Activated CD4-positive, alpha-beta T cell treated with anti-CD3 and anti-CD28 coated beads, Interleukin-2, amount 10 ng/mL, durations not matched to agents 24 days and 14 days (primary cell): ENCODE measurements at regions of chr3 and their contacts with region 1.

Region 1: DNA sequence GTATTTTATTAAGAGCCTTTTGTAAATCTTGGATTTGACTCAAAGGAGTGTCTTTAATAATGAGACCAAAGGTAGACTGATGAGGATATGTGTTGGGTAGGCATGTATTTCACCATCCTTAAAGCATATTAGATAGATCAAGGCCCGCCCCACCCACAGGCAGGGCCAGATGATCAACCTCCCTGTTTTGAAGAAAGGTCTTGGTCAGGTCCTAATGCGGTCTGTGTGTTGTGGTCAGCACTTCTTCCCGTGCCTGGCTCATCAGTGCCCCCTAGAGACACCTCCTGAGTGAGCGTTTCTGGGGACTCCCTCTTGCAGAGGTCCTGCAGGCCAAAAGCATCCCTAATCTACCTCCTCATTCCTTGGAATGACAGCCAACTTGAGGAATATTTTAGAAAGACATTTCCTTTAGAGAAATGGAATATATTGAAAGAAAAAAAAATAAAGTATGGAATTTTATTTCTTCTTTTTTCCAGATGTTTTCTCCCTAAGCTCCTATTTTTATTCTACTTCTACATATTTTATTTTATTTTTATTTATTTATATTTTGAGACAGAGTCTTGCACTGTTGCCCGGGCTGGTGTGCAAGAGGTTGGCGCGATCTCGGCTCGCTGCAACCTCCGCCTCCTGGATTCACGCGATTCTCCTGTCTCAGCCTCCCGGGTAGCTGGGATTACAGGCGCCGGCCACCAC is 6.0 kb downstream of the TM4SF4 start:
- DNase-seq: peak; percentile 76
- H3K4me3 Mint-ChIP-seq: no peak overlapping the region
- H3K27ac Mint-ChIP-seq: no peak overlapping the region
- H3K4me1 Mint-ChIP-seq: no peaks in the 10 kb centered on the region
- H3K27me3 Mint-ChIP-seq: peaks cover 3% of the 10 kb centered on the region

Region 2: GRCh38 chr3:148991194-148992026 is 489.1 kb before region 1 on chr3 and contains the start of gene GYG1:
- intact Hi-C with region 1: no loop called
- DNase-seq: peak; percentile 93
- H3K4me3 Mint-ChIP-seq: peak within 1 kb of the TSS; percentile 82
- H3K27ac Mint-ChIP-seq: peak within 1 kb of the TSS; percentile 87
- H3K4me1 Mint-ChIP-seq: peaks cover 25% of the 10 kb centered on the region
- H3K27me3 Mint-ChIP-seq: no peaks in the 10 kb centered on the region
- total RNA-seq, gene GYG1: 27.4 and 28.0 TPM in 2 replicates

Region 3: DNA sequence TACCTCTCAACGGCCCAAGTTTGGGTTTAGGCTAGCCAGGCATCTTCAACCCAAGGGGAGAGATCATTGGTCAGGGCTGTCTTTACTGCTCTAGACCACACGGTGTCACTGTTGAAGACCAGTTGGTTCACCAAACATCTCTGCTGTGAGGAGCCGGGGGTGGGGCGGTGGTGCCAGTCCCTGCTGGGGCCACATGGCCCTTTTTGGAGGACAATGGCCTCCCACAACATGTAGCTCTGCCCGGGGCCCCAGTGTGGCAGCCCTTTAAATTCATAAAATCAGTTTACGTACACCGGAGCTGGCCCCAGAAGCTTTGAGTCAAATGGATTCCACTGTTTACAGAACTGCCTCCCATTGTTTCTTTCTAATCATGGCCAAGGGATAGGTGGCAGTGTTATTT is 127.9 kb before region 1 on chr3:
- intact Hi-C with region 1: loop called (anchors 2 kb)
- DNase-seq: peak; percentile 73
- H3K4me3 Mint-ChIP-seq: no peak overlapping the region
- H3K27ac Mint-ChIP-seq: no peak overlapping the region
- H3K4me1 Mint-ChIP-seq: no peaks in the 10 kb centered on the region
- H3K27me3 Mint-ChIP-seq: peaks cover 28% of the 10 kb centered on the region

Region 4: GRCh38 chr3:149393345-149394160 is 86.9 kb before region 1 on chr3:
- intact Hi-C with region 1: loop called (anchors 1 kb)
- DNase-seq: peak; percentile 70
- H3K4me3 Mint-ChIP-seq: no peak overlapping the region
- H3K27ac Mint-ChIP-seq: no peak overlapping the region
- H3K4me1 Mint-ChIP-seq: no peaks in the 10 kb centered on the region
- H3K27me3 Mint-ChIP-seq: peaks cover 3% of the 10 kb centered on the region